PC-3 (cell line): ENCODE measurements at regions of chr1 and their contacts with region 1.

Region 1: GRCh38 chr1:229558571-229559335 is at the start of gene ABCB10:
- DNase-seq: peak; percentile 100
- ATAC-seq: peak; percentile 86
- H3K4me3 ChIP-seq: peak within 1 kb of the TSS; percentile 91
- H3K27ac ChIP-seq: peak within 1 kb of the TSS; percentile 43
- H3K4me1 ChIP-seq: peaks cover 23% of the 10 kb centered on the region
- H3K27me3 ChIP-seq: no peaks in the 10 kb centered on the region
- CTCF ChIP-seq: peak; percentile 93
- total RNA-seq, gene ABCB10: 27.4 and 30.4 TPM in 2 replicates

Region 2: DNA sequence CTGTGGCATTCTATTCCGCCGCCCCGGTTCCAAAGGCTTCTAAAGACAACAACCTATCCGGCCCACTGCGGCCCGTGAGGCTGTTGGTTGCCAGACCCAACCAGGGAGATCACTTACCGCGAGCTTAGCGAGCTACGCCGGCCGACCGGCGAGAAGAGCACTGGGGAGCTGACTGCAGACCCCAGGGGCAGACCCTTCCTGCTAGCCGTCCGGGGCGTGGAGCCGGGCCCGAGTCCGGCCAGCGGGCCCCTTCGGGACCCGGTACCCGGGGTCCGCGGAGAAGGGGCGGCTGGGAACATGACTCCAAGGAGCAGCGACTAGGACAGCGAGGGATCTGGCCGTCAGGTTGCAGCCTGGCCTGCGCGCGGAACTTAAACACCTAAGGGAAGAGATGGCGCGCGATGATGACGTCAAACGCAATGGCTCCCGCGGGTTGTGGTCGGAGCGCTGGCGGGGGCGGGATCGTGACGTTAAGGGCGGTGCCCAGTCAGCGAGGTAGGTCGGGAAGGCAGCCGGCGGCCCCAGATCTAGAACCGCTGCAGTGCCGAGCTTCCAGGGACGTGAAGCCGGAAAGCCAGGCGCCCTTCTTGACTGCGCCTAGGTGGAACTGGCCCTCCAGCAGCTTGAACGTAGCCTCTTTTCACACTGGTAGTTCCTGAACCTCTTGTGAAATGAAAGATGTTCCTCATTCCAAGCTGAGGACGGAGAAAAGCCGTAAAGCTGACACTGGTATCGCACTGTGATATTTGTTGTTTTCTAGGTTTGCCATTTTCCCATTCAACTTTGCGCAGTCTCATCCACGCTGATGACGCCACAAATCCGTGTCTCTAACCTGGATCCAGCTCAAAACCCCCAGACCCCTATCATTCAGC is 50.6 kb before region 1 on chr1 and contains the start of gene NUP133:
- CTCF ChIA-PET with region 1: no interaction called
- POLR2A ChIA-PET with region 1: interaction called, 26 read pairs
- intact Hi-C with region 1: loop called (anchors 2 kb)
- DNase-seq: peak; percentile 99
- ATAC-seq: peak; percentile 96
- H3K4me3 ChIP-seq: peak within 1 kb of the TSS; percentile 84
- H3K27ac ChIP-seq: peak within 1 kb of the TSS; percentile 61
- H3K4me1 ChIP-seq: peaks cover 26% of the 10 kb centered on the region
- H3K27me3 ChIP-seq: no peaks in the 10 kb centered on the region
- CTCF ChIP-seq: no peak
- total RNA-seq, gene NUP133: 63.6 and 66.5 TPM in 2 replicates

Region 3: DNA sequence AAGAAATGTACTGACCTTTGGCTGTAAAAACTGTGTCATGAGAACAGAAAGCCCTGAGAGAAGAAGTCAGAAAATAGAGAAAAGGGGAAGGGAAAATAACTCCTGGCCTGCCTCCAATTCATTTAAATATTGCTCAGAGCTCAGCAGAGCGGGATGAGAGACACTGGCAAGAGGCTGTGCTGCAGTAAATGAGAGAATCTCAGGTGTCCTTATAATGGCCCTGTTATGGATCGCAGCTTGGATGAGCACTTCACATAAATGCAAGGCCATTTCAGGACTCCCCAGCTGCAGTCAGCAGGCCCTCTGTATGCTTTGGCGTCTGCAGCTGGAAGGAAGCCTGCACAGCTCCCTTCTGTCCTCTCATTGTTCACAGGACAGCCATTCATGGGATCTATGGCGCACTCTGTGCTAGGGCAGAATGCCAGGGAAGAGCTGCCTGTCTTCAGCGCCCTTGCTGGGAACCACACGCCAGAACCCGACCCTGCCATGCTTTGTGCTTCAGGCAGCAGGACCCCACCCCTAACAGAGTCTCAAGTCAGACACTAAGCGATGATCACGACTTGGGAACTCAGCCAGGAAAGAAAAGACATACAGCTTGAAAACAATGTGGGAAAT is 20.4 kb after region 1 on chr1:
- CTCF ChIA-PET with region 1: interaction called, 18 read pairs
- POLR2A ChIA-PET with region 1: no interaction called
- intact Hi-C with region 1: no loop called
- DNase-seq: peak; percentile 53
- ATAC-seq: peak; percentile 85
- H3K4me3 ChIP-seq: peak overlapping the region; percentile 40
- H3K27ac ChIP-seq: no peak overlapping the region
- H3K4me1 ChIP-seq: peaks cover 12% of the 10 kb centered on the region; the same call in 1 of the 2 replicates
- H3K27me3 ChIP-seq: no peaks in the 10 kb centered on the region
- CTCF ChIP-seq: no peak

Region 4: GRCh38 chr1:229625915-229626831 is 67.4 kb after region 1 on chr1 and contains the starts of genes TAF5L and URB2:
- CTCF ChIA-PET with region 1: interaction called, 4 read pairs
- POLR2A ChIA-PET with region 1: interaction called, 4 read pairs
- intact Hi-C with region 1: loop called (anchors 1 kb)
- DNase-seq: peak; percentile 97
- ATAC-seq: peak; percentile 90
- H3K4me3 ChIP-seq: peak within 1 kb of the TSS; percentile 99
- H3K27ac ChIP-seq: peak within 1 kb of the TSS; percentile 43
- H3K4me1 ChIP-seq: peaks cover 26% of the 10 kb centered on the region
- H3K27me3 ChIP-seq: no peaks in the 10 kb centered on the region
- CTCF ChIP-seq: no peak
- total RNA-seq, gene TAF5L: 24.2 and 28.3 TPM in 2 replicates
- total RNA-seq, gene URB2: 24.0 and 26.2 TPM in 2 replicates